Naive thymus-derived CD4-positive, alpha-beta T cell (primary cell): ENCODE measurements at regions of chr6 and their contacts with region 1.

Region 1: GRCh38 chr6:139364302-139364981 is 10.0 kb downstream of the CITED2 start:
- DNase-seq: peak in 6 of 9 donors; percentile 50 to 74 (median 64)
- ATAC-seq: peak; percentile 81
- H3K4me3 ChIP-seq: no peak overlapping the region
- H3K4me3 Mint-ChIP-seq: peak overlapping the region in 2 of 10 donors; percentile 22 to 34
- H3K27ac ChIP-seq: no peak overlapping the region
- H3K27ac Mint-ChIP-seq: peak overlapping the region; percentile 16 to 88 (median 37)
- H3K4me1 ChIP-seq: peaks cover 0 to 18% of the 10 kb centered on the region in 2 donors
- H3K4me1 Mint-ChIP-seq: peaks cover 17 to 67% (median 53%) of the 10 kb centered on the region in 7 donors
- H3K27me3 ChIP-seq: no peaks in the 10 kb centered on the region
- H3K27me3 Mint-ChIP-seq: peaks cover 0 to 2% (median 0%) of the 10 kb centered on the region in 5 donors

Region 2: GRCh38 chr6:138692058-138692977 is 672.1 kb before region 1 on chr6:
- CTCF ChIA-PET with region 1: no interaction called
- POLR2A ChIA-PET with region 1: no interaction called
- intact Hi-C with region 1: loop called in 1 of 2 experiments (anchors 2 kb)
- DNase-seq: peak; percentile 20 to 74 (median 37)
- ATAC-seq: peak; percentile 80
- H3K4me3 ChIP-seq: peak overlapping the region; percentile 22
- H3K4me3 Mint-ChIP-seq: peak overlapping the region; percentile 53 to 88 (median 86)
- H3K27ac ChIP-seq: no peak overlapping the region
- H3K27ac Mint-ChIP-seq: peak overlapping the region in 2 of 9 donors; percentile 49 to 77
- H3K4me1 ChIP-seq: peaks cover 0 to 3% of the 10 kb centered on the region in 2 donors
- H3K4me1 Mint-ChIP-seq: peaks cover 0 to 13% (median 9%) of the 10 kb centered on the region in 7 donors
- H3K27me3 ChIP-seq: peaks cover 0 to 6% of the 10 kb centered on the region in 2 donors
- H3K27me3 Mint-ChIP-seq: peaks cover 23 to 56% (median 46%) of the 10 kb centered on the region in 5 donors

Region 3: DNA sequence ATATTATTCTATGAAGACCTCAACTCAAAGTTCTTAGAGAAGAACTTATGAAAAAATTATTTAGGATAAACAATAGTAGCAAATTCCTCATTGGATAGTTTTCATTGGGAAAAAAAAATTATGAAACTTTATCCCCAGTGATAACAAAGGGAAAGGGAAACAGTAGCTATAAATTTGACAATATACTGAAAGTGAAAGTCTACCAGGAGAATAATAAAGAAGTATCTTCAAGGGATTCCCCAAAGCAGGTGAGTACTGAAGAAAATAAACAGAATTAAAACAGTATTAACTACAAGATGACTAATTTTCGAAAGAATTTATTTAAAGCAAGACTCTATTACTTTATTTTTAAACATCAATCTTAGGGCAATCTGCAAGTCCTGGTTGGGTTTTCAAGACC is 432.8 kb before region 1 on chr6:
- CTCF ChIA-PET with region 1: no interaction called
- POLR2A ChIA-PET with region 1: no interaction called
- intact Hi-C with region 1: loop called in 1 of 2 experiments (anchors 5 kb)
- DNase-seq: no peak
- ATAC-seq: no peak
- H3K4me3 ChIP-seq: no peak overlapping the region
- H3K4me3 Mint-ChIP-seq: no peak overlapping the region
- H3K27ac ChIP-seq: no peak overlapping the region
- H3K27ac Mint-ChIP-seq: peak overlapping the region in 2 of 9 donors; percentile 3 to 19
- H3K4me1 ChIP-seq: peaks cover 3 to 4% of the 10 kb centered on the region in 2 donors
- H3K4me1 Mint-ChIP-seq: peaks cover 0 to 13% (median 12%) of the 10 kb centered on the region in 7 donors
- H3K27me3 ChIP-seq: no peaks in the 10 kb centered on the region
- H3K27me3 Mint-ChIP-seq: no peaks in the 10 kb centered on the region

Region 4: DNA sequence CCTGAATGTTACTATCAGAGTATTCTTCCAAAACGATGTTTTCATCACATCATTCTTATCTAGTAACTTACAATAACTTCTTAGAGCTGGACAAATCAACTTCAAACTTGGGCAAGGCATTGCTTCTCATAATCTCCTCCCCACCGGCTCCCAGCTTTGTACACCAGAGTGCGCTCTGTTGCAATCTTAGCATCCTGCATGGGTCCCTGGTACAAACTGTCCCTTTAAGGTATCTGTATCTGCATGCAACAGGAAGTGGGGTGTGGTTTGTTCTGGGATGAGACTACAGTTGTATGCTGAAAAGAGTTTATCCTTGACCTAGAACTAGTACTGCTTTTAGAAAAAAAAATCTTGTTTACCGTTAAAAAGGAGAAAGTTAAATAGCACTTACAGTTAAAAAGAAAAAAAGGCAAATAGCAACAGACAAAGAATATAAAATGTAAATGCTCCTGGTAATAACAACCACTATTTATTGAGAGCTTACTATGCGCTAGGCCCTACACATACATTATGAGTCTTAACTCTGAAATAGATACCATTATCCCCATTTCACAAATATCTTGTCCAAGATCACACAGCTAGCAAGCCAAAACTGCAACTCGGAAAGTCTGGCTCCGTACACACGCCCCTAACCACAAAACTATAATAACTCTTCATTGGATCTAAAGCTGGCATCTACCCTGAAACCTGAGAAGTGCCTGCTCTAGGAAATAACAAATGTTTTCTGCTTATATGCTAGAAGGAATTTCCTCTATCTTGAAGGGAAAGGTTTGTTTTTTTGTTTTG is 239.4 kb before region 1 on chr6:
- CTCF ChIA-PET with region 1: interaction called, 33 read pairs
- POLR2A ChIA-PET with region 1: interaction called, 7 read pairs
- intact Hi-C with region 1: loop called (anchors 1 kb)
- DNase-seq: peak in 8 of 9 donors; percentile 65 to 90 (median 84)
- ATAC-seq: peak; percentile 99
- H3K4me3 ChIP-seq: peak overlapping the region; percentile 31
- H3K4me3 Mint-ChIP-seq: peak overlapping the region; percentile 25 to 86 (median 68)
- H3K27ac ChIP-seq: peak overlapping the region; percentile 60
- H3K27ac Mint-ChIP-seq: peak overlapping the region; percentile 86 to 97 (median 94)
- H3K4me1 ChIP-seq: peaks cover 28 to 38% of the 10 kb centered on the region in 2 donors
- H3K4me1 Mint-ChIP-seq: peaks cover 19 to 65% (median 60%) of the 10 kb centered on the region in 7 donors
- H3K27me3 ChIP-seq: no peaks in the 10 kb centered on the region
- H3K27me3 Mint-ChIP-seq: no peaks in the 10 kb centered on the region

Region 5: GRCh38 chr6:139154881-139155547 is 209.4 kb before region 1 on chr6:
- CTCF ChIA-PET with region 1: no interaction called
- POLR2A ChIA-PET with region 1: no interaction called
- intact Hi-C with region 1: no loop called
- DNase-seq: no peak
- ATAC-seq: peak; percentile 21
- H3K4me3 ChIP-seq: no peak overlapping the region
- H3K4me3 Mint-ChIP-seq: peak overlapping the region in 9 of 10 donors; percentile 27 to 78 (median 41)
- H3K27ac ChIP-seq: no peak overlapping the region
- H3K27ac Mint-ChIP-seq: peak overlapping the region in 8 of 9 donors; percentile 36 to 94 (median 70)
- H3K4me1 ChIP-seq: peaks cover 57 to 77% of the 10 kb centered on the region in 2 donors
- H3K4me1 Mint-ChIP-seq: peaks cover 63 to 93% (median 75%) of the 10 kb centered on the region in 7 donors
- H3K27me3 ChIP-seq: no peaks in the 10 kb centered on the region
- H3K27me3 Mint-ChIP-seq: no peaks in the 10 kb centered on the region

Region 6: GRCh38 chr6:139219271-139219729 is 145.1 kb before region 1 on chr6:
- CTCF ChIA-PET with region 1: interaction called, 151 read pairs
- POLR2A ChIA-PET with region 1: interaction called, 20 read pairs
- intact Hi-C with region 1: loop called (anchors 1 kb)
- DNase-seq: peak; percentile 39 to 76 (median 60)
- ATAC-seq: peak; percentile 100
- H3K4me3 ChIP-seq: no peak overlapping the region
- H3K4me3 Mint-ChIP-seq: peak overlapping the region in 8 of 10 donors; percentile 41 to 68 (median 58)
- H3K27ac ChIP-seq: no peak overlapping the region
- H3K27ac Mint-ChIP-seq: peak overlapping the region; percentile 49 to 92 (median 78)
- H3K4me1 ChIP-seq: peaks cover 5 to 10% of the 10 kb centered on the region in 2 donors
- H3K4me1 Mint-ChIP-seq: peaks cover 6 to 20% (median 12%) of the 10 kb centered on the region in 7 donors
- H3K27me3 ChIP-seq: no peaks in the 10 kb centered on the region
- H3K27me3 Mint-ChIP-seq: no peaks in the 10 kb centered on the region

Region 7: GRCh38 chr6:139250296-139251044 is 114.0 kb before region 1 on chr6:
- CTCF ChIA-PET with region 1: interaction called, 4 read pairs
- POLR2A ChIA-PET with region 1: no interaction called
- intact Hi-C with region 1: loop called (anchors 1 kb)
- DNase-seq: peak; percentile 7 to 45 (median 34)
- ATAC-seq: peak; percentile 90
- H3K4me3 ChIP-seq: no peak overlapping the region
- H3K4me3 Mint-ChIP-seq: peak overlapping the region in 6 of 10 donors; percentile 16 to 85 (median 58)
- H3K27ac ChIP-seq: no peak overlapping the region
- H3K27ac Mint-ChIP-seq: peak overlapping the region; percentile 32 to 97 (median 73)
- H3K4me1 ChIP-seq: peaks cover 21 to 23% of the 10 kb centered on the region in 2 donors
- H3K4me1 Mint-ChIP-seq: peaks cover 23 to 48% (median 46%) of the 10 kb centered on the region in 7 donors
- H3K27me3 ChIP-seq: no peaks in the 10 kb centered on the region
- H3K27me3 Mint-ChIP-seq: no peaks in the 10 kb centered on the region

Region 8: DNA sequence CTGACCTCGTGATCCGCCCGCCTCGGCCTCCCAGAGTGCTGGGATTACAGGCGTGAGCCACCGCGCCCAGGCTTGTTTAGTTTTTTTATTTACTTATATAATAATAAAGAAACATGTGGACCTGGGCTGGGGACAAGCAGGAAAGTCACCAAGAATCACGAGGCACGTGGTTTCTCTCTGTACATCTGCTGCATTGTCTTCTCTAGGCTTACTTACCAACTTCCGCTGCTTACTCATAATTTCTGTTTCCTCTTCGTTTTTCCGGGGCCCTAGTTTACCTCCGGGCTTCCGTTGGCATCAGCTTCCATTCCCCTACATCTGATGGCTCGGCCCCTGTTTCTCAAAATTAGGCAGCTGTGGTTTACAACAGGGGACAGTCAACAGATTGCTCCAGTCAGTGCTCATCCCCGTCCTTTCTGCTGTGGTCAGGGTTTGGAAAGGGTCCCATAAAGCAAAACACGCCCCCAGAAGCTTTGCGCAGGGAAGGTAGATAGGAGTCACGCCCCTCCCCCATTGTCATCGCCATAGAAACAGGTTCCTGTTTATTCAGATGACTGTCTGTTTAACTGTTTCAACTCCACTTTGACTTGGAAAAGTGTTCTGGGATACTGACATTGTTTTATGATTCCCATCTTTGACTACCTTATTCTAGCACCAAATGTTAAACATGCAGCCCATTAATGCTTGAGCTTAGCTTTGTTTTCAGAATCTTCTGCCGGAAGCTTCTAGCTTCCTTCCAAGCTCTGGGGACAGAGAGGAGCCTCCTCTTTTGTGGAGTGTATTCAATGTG is 40.7 kb before region 1 on chr6:
- CTCF ChIA-PET with region 1: interaction called, 13 read pairs
- POLR2A ChIA-PET with region 1: interaction called, 4 read pairs
- intact Hi-C with region 1: loop called (anchors 1 to 2 kb)
- DNase-seq: peak; percentile 54 to 90 (median 86)
- ATAC-seq: peak; percentile 90
- H3K4me3 ChIP-seq: peak overlapping the region; percentile 64
- H3K4me3 Mint-ChIP-seq: peak overlapping the region; percentile 80 to 96 (median 90)
- H3K27ac ChIP-seq: peak overlapping the region; percentile 83
- H3K27ac Mint-ChIP-seq: peak overlapping the region; percentile 96 to 100 (median 99)
- H3K4me1 ChIP-seq: peaks cover 12 to 19% of the 10 kb centered on the region in 2 donors
- H3K4me1 Mint-ChIP-seq: peaks cover 19 to 44% (median 32%) of the 10 kb centered on the region in 7 donors
- H3K27me3 ChIP-seq: no peaks in the 10 kb centered on the region
- H3K27me3 Mint-ChIP-seq: no peaks in the 10 kb centered on the region

Region 9: GRCh38 chr6:139407718-139408222 is 43.3 kb after region 1 on chr6:
- CTCF ChIA-PET with region 1: no interaction called
- POLR2A ChIA-PET with region 1: no interaction called
- intact Hi-C with region 1: no loop called
- DNase-seq: no peak
- ATAC-seq: no peak
- H3K4me3 ChIP-seq: no peak overlapping the region
- H3K4me3 Mint-ChIP-seq: no peak overlapping the region
- H3K27ac ChIP-seq: no peak overlapping the region
- H3K27ac Mint-ChIP-seq: no peak overlapping the region
- H3K4me1 ChIP-seq: no peaks in the 10 kb centered on the region
- H3K4me1 Mint-ChIP-seq: peaks cover 0 to 2% (median 0%) of the 10 kb centered on the region in 7 donors
- H3K27me3 ChIP-seq: no peaks in the 10 kb centered on the region
- H3K27me3 Mint-ChIP-seq: no peaks in the 10 kb centered on the region

Region 10: GRCh38 chr6:139648430-139649000 is 284.1 kb after region 1 on chr6:
- CTCF ChIA-PET with region 1: no interaction called
- POLR2A ChIA-PET with region 1: no interaction called
- intact Hi-C with region 1: no loop called
- DNase-seq: no peak
- ATAC-seq: no peak
- H3K4me3 ChIP-seq: no peak overlapping the region
- H3K4me3 Mint-ChIP-seq: no peak overlapping the region
- H3K27ac ChIP-seq: no peak overlapping the region
- H3K27ac Mint-ChIP-seq: no peak overlapping the region
- H3K4me1 ChIP-seq: no peaks in the 10 kb centered on the region
- H3K4me1 Mint-ChIP-seq: no peaks in the 10 kb centered on the region
- H3K27me3 ChIP-seq: no peaks in the 10 kb centered on the region
- H3K27me3 Mint-ChIP-seq: peaks cover 5 to 20% (median 12%) of the 10 kb centered on the region in 5 donors